Aorta (tissue), 5 donors: ENCODE measurements at regions of chr18 and their contacts with region 1.

Region 1: GRCh38 chr18:58911766-58912165 is 47.1 kb downstream of the ZNF532 start:
- DNase-seq: no peak
- ATAC-seq: peak; percentile 28
- H3K4me3 ChIP-seq: no peak overlapping the region
- H3K27ac ChIP-seq: peak overlapping the region; percentile 72 to 92
- H3K4me1 ChIP-seq: peaks cover 0 to 2% of the 10 kb centered on the region in 2 donors
- H3K27me3 ChIP-seq: no peaks in the 10 kb centered on the region

Region 2: GRCh38 chr18:58864146-58865032 is 47.4 kb before region 1 on chr18 and contains the start of gene ZNF532:
- intact Hi-C with region 1: loop called (anchors 5 kb)
- DNase-seq: peak in 1 of 2 donors; percentile 62
- ATAC-seq: peak; percentile 65
- H3K4me3 ChIP-seq: peak within 1 kb of the TSS; percentile 29 to 74
- H3K27ac ChIP-seq: peak within 1 kb of the TSS; percentile 99 to 100
- H3K4me1 ChIP-seq: peaks cover 2 to 15% of the 10 kb centered on the region in 2 donors
- H3K27me3 ChIP-seq: no peaks in the 10 kb centered on the region
- total RNA-seq, gene ZNF532: 183 to 194 TPM

Region 3: DNA sequence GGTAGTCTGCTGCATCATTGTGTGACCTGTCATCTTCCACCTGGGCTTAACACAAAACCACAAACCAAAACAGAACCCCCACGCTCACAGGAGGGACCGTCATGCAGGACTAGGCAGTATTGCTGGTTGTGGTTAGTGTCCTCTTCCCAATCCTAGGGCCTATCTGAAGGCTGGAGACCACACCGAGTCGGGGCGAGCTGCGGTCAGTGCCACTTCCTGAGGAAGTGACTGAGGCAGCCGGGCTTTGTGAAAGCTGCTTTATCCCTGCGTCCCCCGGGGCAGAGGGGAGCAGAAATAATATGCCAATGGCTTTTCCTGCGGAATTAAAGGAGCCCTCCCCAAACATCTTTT is 24.2 kb before region 1 on chr18:
- intact Hi-C with region 1: no loop called
- DNase-seq: peak; percentile 83 to 90
- ATAC-seq: peak; percentile 88
- H3K4me3 ChIP-seq: no peak overlapping the region
- H3K27ac ChIP-seq: peak overlapping the region; percentile 66 to 68
- H3K4me1 ChIP-seq: peaks cover under 1 to 9% of the 10 kb centered on the region in 2 donors
- H3K27me3 ChIP-seq: no peaks in the 10 kb centered on the region

Region 4: DNA sequence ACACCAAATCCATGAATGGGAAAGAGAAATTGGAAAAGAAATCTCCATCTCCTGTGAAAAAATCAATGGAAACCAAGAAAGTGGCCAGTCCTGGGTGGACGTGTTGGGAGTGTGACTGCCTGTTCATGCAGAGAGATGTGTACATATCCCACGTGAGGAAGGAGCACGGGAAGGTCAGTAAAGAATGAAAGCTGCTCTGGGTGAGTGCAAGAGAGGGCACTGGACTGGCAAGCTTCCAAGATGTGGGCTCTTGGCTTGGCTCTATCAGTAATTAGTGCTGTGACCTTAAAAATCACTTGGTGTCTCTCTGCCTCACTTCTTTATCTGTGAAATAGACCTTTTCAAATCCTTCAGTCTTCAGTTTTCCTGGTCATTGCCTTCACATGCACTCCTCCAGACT is 41.9 kb after region 1 on chr18:
- intact Hi-C with region 1: no loop called
- DNase-seq: no peak
- ATAC-seq: no peak
- H3K4me3 ChIP-seq: no peak overlapping the region
- H3K27ac ChIP-seq: peak overlapping the region in 1 of 2 donors; percentile 25
- H3K4me1 ChIP-seq: no peaks in the 10 kb centered on the region
- H3K27me3 ChIP-seq: no peaks in the 10 kb centered on the region